ENCODE measurements at regions of chr11 and their contacts with region 1.

Region 1: GRCh38 chr11:119684361-119685110 is 44.5 kb downstream of the NECTIN1 start:
- DNase-seq: peak in 2 of 3 donors; percentile 35 to 51
- H3K4me3 ChIP-seq: peak overlapping the region in 1 of 7 experiments; percentile 3
- H3K27ac ChIP-seq: no peak overlapping the region
- H3K4me1 ChIP-seq: peaks cover 0 to 36% (median 19%) of the 10 kb centered on the region in 4 experiments
- H3K27me3 ChIP-seq: no peaks in the 10 kb centered on the region

Region 2: DNA sequence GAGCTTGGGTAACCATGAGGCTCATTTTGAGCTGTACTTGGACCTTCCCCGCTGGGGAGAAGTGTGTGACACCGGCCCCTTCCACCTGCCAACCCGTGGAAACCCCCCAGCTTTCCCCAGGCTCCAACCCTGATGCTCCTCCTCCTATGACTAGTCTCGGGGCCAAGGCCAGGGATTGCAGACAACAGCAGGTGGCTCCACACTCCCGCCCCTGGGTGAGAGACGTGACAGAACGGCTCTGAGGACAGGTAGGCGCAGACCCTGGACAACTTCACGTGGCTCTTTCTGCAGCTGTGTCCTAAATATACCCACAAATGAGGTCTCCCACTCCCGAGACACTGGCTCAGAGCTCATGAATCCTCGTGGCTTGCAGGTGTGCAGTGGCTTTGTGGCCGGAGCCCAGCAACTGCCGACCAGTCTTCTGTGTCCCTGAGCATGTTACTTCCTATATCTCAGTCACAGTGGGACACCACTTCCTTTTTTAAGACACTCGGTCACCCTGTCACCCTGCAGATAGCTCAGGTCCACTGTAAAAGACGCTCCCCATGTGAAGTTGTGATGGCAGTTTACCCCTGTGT is 10.7 kb before region 1 on chr11:
- CTCF ChIA-PET with region 1: interaction called, 12 read pairs
- POLR2A ChIA-PET with region 1: no interaction called
- DNase-seq: peak; percentile 48 to 86 (median 82)
- H3K4me3 ChIP-seq: peak overlapping the region in 1 of 7 experiments; percentile 23
- H3K27ac ChIP-seq: no peak overlapping the region
- H3K4me1 ChIP-seq: peaks cover 0 to 25% (median 20%) of the 10 kb centered on the region in 4 experiments
- H3K27me3 ChIP-seq: peaks cover 0 to 3% (median 0%) of the 10 kb centered on the region in 5 experiments

Region 3: GRCh38 chr11:119810478-119811232 is 126.1 kb after region 1 on chr11:
- CTCF ChIA-PET with region 1: no interaction called
- POLR2A ChIA-PET with region 1: no interaction called
- DNase-seq: peak in 2 of 3 donors; percentile 10 to 16
- H3K4me3 ChIP-seq: no peak overlapping the region
- H3K27ac ChIP-seq: no peak overlapping the region
- H3K4me1 ChIP-seq: no peaks in the 10 kb centered on the region
- H3K27me3 ChIP-seq: peaks cover 0 to 28% (median 6%) of the 10 kb centered on the region in 5 experiments